ENCODE measurements at regions of chr1 and their contacts with region 1.

Region 1: GRCh38 chr1:150532868-150533302 is 16.3 kb upstream of the ADAMTSL4 start:
- DNase-seq: peak in 2 of 10 donors; percentile 24 to 46

Region 2: DNA sequence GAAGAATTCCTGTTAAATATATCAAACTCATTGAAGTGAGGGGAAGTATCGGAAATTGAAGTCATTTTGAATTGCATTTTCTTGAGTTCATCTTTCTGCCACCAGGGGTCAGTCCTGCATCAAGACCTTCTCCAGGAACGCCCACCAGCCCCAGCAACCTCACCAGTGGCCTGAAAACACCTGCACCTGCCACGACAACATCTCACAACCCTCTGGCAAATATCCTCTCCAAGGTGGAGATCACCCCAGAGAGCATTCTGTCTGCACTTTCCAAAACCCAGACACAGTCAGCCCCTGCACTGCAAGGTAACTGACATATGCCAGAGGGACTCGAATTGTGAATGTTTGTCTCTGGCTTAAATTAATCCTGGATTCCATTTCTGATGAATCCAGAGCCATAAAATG is 68.5 kb before region 1 on chr1:
- intact Hi-C with region 1: loop called (anchors 2 kb)
- DNase-seq: peak in 5 of 10 donors; percentile 18 to 43 (median 28)

Region 3: GRCh38 chr1:150567717-150568593 is 35.1 kb after region 1 on chr1:
- intact Hi-C with region 1: no loop called
- DNase-seq: peak in 4 of 10 donors; percentile 25 to 85 (median 46)

Measured in posterior cingulate gyrus (tissue), 11 donors.